ENCODE measurements at regions of chr9 and their contacts with region 1.

Region 1: GRCh38 chr9:92716557-92716956 is 46.6 kb upstream of the IPPK start:
- DNase-seq: peak; percentile 54
- H3K4me3 ChIP-seq: no peak overlapping the region
- H3K27ac ChIP-seq: no peak overlapping the region
- H3K4me1 ChIP-seq: peaks cover 5% of the 10 kb centered on the region
- H3K27me3 ChIP-seq: no peaks in the 10 kb centered on the region
- CTCF ChIP-seq: peak; percentile 92

Region 2: GRCh38 chr9:91921371-91921770 is 795.2 kb before region 1 on chr9:
- CTCF ChIA-PET with region 1: no interaction called
- POLR2A ChIA-PET with region 1: no interaction called
- intact Hi-C with region 1: no loop called
- DNase-seq: no peak
- H3K4me3 ChIP-seq: no peak overlapping the region
- H3K27ac ChIP-seq: no peak overlapping the region
- H3K4me1 ChIP-seq: no peaks in the 10 kb centered on the region
- H3K27me3 ChIP-seq: no peaks in the 10 kb centered on the region
- CTCF ChIP-seq: no peak

Region 3: DNA sequence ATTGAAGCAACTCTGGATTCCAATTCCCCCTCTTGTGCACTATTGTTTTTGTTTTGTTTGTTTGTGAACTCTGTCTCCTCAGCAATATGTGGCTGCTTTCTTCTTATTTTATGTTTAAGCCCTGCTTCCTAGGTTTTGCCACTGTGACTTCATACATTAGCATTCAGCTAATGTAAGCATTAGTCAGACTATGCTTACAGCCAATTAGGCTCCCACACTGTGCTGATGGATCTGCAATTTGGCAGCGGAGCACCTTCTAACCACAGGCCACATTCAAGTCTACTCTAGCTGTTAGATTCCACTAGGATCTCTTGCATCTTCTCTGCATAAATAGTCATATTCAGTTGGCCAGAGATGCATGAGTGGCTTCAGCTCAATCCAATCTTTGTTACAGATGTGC is 57.7 kb after region 1 on chr9:
- CTCF ChIA-PET with region 1: no interaction called
- POLR2A ChIA-PET with region 1: no interaction called
- intact Hi-C with region 1: no loop called
- DNase-seq: peak; percentile 18
- H3K4me3 ChIP-seq: no peak overlapping the region
- H3K27ac ChIP-seq: no peak overlapping the region
- H3K4me1 ChIP-seq: peaks cover 4% of the 10 kb centered on the region
- H3K27me3 ChIP-seq: no peaks in the 10 kb centered on the region
- CTCF ChIP-seq: no peak

Region 4: DNA sequence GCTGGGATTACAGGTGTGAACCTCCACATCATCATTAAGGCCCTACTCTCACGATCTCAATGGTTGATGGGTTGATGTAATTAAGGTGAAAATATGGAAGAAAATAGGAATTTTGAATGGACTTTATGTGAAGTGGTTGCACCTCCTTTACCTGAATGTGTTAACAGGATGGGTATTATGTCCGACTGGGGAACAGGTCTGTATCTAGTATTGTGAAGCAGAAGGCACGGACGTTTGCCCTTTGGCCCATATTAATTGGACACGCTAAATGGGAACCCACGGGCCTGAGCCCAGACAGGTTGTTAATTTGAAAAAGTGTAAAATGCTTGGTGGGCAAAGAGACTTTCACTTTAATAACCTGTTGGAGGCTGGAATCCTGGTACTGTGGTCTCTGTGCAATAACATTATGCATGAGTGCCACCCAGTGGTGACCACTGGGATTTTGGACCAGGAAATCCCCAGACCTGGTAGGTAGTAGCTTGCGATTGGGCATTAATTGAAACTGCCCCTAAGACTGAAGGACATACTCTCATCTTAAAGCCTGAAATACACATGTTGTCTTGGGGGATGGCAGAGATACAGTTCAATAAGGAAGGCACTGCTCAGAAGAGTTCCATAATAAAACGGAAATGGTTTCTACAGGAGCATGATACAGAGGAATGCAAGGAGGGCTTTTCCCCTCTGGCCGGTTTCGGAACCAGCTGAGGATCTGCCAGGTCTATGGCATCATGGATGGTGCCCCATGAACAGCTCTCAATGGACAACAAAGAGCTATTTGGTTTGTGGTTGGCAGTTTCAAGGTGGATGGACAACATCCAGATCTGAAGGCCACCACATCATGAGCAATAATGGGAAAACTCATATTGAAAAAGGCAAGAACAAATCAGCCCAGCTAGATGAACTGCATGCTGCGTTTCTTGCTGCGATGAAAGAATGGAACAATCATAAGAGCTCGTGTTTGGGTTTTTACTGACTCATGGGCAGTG is 74.3 kb after region 1 on chr9:
- CTCF ChIA-PET with region 1: interaction called, 18 read pairs
- POLR2A ChIA-PET with region 1: no interaction called
- intact Hi-C with region 1: loop called (anchors 1 kb)
- DNase-seq: peak; percentile 81
- H3K4me3 ChIP-seq: no peak overlapping the region
- H3K27ac ChIP-seq: no peak overlapping the region
- H3K4me1 ChIP-seq: no peaks in the 10 kb centered on the region
- H3K27me3 ChIP-seq: peaks cover 7% of the 10 kb centered on the region
- CTCF ChIP-seq: peak; percentile 85

Measured in A673 (cell line).